IMR-90 (cell line): ENCODE measurements at regions of chr6 and their contacts with region 1.

Region 1: DNA sequence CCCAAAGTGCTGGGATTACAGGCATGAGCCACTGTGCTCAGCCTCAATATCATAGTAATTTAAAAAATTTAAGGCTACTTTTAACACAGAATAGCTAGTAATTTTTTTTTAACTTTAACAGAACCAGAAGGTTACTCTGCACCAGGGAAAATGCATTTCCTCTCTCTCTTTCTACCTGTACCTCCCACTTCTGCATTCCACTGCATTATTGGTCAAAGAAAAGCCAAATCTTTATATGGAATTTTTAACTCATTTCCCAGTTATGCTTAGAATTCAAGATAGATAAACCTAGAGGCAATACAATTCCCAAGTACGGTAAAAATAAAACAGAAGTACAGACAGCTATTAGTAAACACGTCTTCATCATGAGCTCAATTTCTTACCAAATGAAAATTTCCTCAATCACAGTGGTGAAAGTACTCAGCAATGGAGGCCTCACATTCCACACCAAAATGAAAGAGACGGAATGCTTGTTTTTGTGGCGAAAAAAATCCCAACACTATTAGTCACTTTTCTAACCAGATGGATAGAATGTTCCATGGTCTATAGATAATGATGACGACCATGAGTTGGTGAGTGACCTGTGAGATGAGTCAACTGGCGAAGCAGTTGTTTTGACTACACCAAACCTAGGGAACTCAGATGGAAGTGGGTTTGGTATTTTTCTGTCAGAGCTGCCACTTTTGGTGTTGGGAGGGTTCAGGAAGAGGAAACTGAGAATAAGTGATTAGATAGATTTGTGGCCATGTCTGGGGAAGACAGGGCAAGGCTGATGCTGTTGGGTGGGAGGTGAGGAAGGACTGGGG is 104.7 kb upstream of the SGK1 start:
- DNase-seq: peak; percentile 100
- ATAC-seq: peak; percentile 66
- H3K4me3 ChIP-seq: no peak overlapping the region
- H3K27ac ChIP-seq: peak overlapping the region; percentile 96
- H3K4me1 ChIP-seq: peaks cover 19% of the 10 kb centered on the region
- H3K27me3 ChIP-seq: no peaks in the 10 kb centered on the region
- CTCF ChIP-seq: no peak
- POLR2A ChIP-seq: peak; percentile 40; the same call in 1 of the 2 replicates
- RAD21 ChIP-seq: peak; percentile 24

Region 2: GRCh38 chr6:134187751-134188150 is 234.9 kb before region 1 on chr6:
- CTCF ChIA-PET with region 1: no interaction called
- POLR2A ChIA-PET with region 1: interaction called, 12 read pairs
- dilution Hi-C with region 1: no loop called
- in situ Hi-C with region 1: no loop called
- intact Hi-C with region 1: no loop called
- DNase-seq: no peak
- ATAC-seq: no peak
- H3K4me3 ChIP-seq: no peak overlapping the region
- H3K27ac ChIP-seq: no peak overlapping the region
- H3K4me1 ChIP-seq: no peaks in the 10 kb centered on the region
- H3K27me3 ChIP-seq: no peaks in the 10 kb centered on the region
- CTCF ChIP-seq: no peak
- POLR2A ChIP-seq: no peak
- RAD21 ChIP-seq: no peak

Region 3: GRCh38 chr6:134295953-134296553 is 126.6 kb before region 1 on chr6:
- CTCF ChIA-PET with region 1: no interaction called
- POLR2A ChIA-PET with region 1: no interaction called
- dilution Hi-C with region 1: no loop called
- in situ Hi-C with region 1: no loop called
- intact Hi-C with region 1: loop called (anchors 2 kb)
- DNase-seq: peak; percentile 100
- ATAC-seq: peak; percentile 95
- H3K4me3 ChIP-seq: no peak overlapping the region
- H3K27ac ChIP-seq: peak overlapping the region; percentile 96
- H3K4me1 ChIP-seq: peaks cover 14% of the 10 kb centered on the region
- H3K27me3 ChIP-seq: no peaks in the 10 kb centered on the region
- CTCF ChIP-seq: no peak
- POLR2A ChIP-seq: peak; percentile 40
- RAD21 ChIP-seq: peak; percentile 14